ENCODE measurements at regions of chr18 and their contacts with region 1.

Region 1: DNA sequence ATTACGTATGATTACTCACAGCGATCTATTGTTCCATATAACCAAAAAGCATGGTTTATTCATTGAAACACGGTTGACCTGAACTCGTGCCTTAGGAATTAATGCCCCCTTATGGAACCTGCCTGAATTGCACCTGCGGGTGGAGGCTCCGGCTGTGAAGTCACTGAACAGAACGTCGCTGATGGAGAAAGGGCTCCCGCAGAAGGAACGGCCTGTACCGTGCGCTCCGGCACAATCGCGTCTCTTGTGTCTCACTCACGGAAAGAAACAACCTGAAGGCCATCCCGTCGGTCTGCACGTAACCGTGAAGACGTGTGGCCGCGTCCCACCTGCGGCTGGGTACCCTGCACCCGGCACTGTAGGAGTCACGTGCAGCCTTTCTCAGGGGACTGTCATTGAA is 133.1 kb downstream of the NFATC1 start:
- DNase-seq: peak; percentile 69
- H3K4me3 ChIP-seq: no peak overlapping the region
- H3K27ac ChIP-seq: peak overlapping the region; percentile 30
- H3K4me1 ChIP-seq: peaks cover 50% of the 10 kb centered on the region
- CTCF ChIP-seq: peak; percentile 80

Region 2: GRCh38 chr18:79309614-79310358 is 219.1 kb before region 1 on chr18:
- CTCF ChIA-PET with region 1: no interaction called
- POLR2A ChIA-PET with region 1: no interaction called
- intact Hi-C with region 1: no loop called
- DNase-seq: no peak
- H3K4me3 ChIP-seq: no peak overlapping the region
- H3K27ac ChIP-seq: no peak overlapping the region
- H3K4me1 ChIP-seq: no peaks in the 10 kb centered on the region
- CTCF ChIP-seq: no peak

Region 3: DNA sequence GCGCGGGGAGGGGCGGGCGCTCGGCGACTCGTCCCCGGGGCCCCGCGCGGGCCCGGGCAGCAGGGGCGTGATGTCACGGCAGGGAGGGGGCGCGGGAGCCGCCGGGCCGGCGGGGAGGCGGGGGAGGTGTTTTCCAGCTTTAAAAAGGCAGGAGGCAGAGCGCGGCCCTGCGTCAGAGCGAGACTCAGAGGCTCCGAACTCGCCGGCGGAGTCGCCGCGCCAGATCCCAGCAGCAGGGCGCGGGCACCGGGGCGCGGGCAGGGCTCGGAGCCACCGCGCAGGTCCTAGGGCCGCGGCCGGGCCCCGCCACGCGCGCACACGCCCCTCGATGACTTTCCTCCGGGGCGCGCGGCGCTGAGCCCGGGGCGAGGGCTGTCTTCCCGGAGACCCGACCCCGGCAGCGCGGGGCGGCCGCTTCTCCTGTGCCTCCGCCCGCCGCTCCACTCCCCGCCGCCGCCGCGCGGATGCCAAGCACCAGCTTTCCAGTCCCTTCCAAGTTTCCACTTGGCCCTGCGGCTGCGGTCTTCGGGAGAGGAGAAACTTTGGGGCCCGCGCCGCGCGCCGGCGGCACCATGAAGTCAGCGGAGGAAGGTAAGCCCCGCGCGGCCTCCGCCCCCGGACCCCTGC is 133.0 kb before region 1 on chr18 and contains the start of gene NFATC1:
- CTCF ChIA-PET with region 1: no interaction called
- POLR2A ChIA-PET with region 1: interaction called, 7 read pairs
- intact Hi-C with region 1: loop called (anchors 2 kb)
- DNase-seq: peak; percentile 61
- H3K4me3 ChIP-seq: peak within 1 kb of the TSS; percentile 86
- H3K27ac ChIP-seq: peak within 1 kb of the TSS; percentile 87
- H3K4me1 ChIP-seq: peaks cover 29% of the 10 kb centered on the region
- CTCF ChIP-seq: no peak
- total RNA-seq, gene NFATC1: 15.3 and 23.6 TPM in 2 replicates

Region 4: GRCh38 chr18:79749251-79750191 is 220.7 kb after region 1 on chr18:
- CTCF ChIA-PET with region 1: no interaction called
- POLR2A ChIA-PET with region 1: no interaction called
- intact Hi-C with region 1: no loop called
- DNase-seq: no peak
- H3K4me3 ChIP-seq: no peak overlapping the region
- H3K27ac ChIP-seq: no peak overlapping the region
- H3K4me1 ChIP-seq: no peaks in the 10 kb centered on the region
- CTCF ChIP-seq: no peak